ENCODE measurements at regions of chr19 and their contacts with region 1.

Region 1: DNA sequence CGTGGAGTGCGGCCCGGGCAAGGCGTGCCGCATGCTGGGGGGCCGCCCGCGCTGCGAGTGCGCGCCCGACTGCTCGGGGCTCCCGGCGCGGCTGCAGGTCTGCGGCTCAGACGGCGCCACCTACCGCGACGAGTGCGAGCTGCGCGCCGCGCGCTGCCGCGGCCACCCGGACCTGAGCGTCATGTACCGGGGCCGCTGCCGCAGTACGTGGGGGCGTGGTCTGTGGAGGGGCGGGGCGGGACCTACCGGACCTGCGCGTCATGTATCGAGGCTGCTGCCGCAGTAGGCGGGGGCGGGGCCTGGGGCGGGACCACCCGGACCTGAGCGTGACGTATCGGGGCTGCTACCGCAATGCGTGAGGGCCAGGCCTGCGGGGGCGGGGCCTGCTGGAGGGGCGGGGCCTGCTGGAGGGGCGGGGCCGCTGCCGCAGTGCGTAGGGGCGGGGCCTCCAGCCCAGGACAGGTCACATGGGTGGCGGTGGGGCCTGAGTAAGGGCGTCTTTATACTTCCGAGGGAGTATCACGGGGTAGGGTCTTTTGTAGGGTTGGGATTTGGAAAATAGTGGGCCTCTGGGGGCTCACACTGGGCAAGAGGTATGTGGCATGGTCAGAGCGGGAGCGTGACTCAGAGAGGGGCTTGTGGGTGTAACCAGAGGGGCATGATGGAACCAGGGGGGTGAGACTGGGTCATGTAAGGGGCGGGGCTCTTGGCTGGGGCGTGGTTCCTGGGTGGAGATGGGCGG is 4.3 kb downstream of the FSTL3 start:
- DNase-seq: peak; percentile 95
- H3K4me3 Mint-ChIP-seq: peak overlapping the region; percentile 86
- H3K27ac Mint-ChIP-seq: peak overlapping the region; percentile 99
- H3K4me1 Mint-ChIP-seq: no peaks in the 10 kb centered on the region
- H3K27me3 Mint-ChIP-seq: peaks cover 5% of the 10 kb centered on the region

Region 2: GRCh38 chr19:539429-540030 is 140.9 kb before region 1 on chr19:
- intact Hi-C with region 1: no loop called
- DNase-seq: no peak
- H3K4me3 Mint-ChIP-seq: no peak overlapping the region
- H3K27ac Mint-ChIP-seq: no peak overlapping the region
- H3K4me1 Mint-ChIP-seq: peaks cover 10% of the 10 kb centered on the region
- H3K27me3 Mint-ChIP-seq: no peaks in the 10 kb centered on the region

Region 3: GRCh38 chr19:610801-611505 is 69.5 kb before region 1 on chr19:
- intact Hi-C with region 1: loop called (anchors 2 kb)
- DNase-seq: peak; percentile 56
- H3K4me3 Mint-ChIP-seq: peak overlapping the region; percentile 87
- H3K27ac Mint-ChIP-seq: peak overlapping the region; percentile 98
- H3K4me1 Mint-ChIP-seq: peaks cover 14% of the 10 kb centered on the region
- H3K27me3 Mint-ChIP-seq: no peaks in the 10 kb centered on the region

Region 4: DNA sequence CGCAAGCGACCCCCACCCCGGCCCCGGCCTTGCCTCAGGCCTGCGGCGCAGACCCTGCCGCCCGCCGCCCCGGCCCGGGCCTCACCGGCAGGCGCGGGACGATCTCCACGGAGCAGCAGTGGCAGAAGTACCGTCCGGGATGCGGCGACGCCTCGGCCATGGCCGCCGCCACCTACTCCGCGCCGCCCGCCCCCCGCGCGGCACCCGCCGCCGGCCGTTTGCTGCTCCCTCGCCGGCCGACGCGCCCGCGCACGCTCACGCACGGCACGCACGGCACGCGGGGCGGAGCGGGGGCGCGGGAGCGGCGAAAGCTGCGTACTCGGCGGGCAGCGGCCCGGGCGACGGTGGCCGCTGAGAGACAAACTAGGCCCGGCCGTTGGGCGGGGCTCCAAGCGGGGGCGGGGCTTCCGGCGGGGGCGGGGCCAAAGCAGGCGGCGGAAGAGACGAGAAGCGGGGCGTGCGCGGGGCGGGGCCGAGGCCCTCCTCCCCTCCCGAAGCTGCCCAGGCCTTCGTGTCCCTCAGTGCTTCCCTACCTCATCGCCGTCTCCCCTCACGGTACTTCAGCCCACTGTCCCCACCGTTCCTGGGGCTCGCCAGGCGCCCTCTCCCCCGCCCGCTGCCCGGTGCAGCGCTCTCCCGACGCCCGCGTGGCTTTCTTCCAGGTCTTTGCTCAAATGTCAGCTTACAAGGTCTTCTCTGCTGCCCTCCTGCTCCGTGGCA is 17.3 kb before region 1 on chr19 and contains the start of gene RNF126:
- intact Hi-C with region 1: loop called (anchors 1 kb)
- DNase-seq: peak; percentile 84
- H3K4me3 Mint-ChIP-seq: peak within 1 kb of the TSS; percentile 95
- H3K27ac Mint-ChIP-seq: peak within 1 kb of the TSS; percentile 97
- H3K4me1 Mint-ChIP-seq: peaks cover 33% of the 10 kb centered on the region
- H3K27me3 Mint-ChIP-seq: no peaks in the 10 kb centered on the region
- total RNA-seq, gene RNF126: 107 and 110 TPM in 2 replicates

Region 5: DNA sequence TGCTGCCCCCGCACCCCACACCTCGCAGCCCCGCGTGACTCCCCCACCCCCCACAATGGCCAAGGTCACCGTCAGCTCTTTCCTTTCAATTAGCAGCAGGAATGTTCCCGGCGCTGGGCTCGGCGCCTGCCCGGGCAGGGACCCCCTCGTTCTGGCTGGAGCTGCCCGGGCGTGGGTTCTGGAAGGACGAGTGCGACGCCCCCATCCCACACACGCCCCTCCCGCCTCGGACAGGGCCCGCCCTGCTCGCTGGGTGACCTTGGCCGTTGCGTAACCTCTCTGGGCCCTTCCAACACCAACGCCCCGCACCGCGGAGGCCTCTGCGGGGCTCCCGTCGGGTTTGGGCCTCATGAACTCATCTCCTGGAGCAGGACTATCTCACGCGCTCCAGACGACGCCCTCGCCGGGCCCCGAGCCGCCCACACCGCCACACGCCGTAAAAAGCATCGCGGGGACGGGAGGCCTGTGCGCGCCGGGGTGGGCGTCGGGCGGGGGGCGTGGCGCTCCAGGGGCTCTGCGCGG is 38.6 kb after region 1 on chr19:
- intact Hi-C with region 1: no loop called
- DNase-seq: no peak
- H3K4me3 Mint-ChIP-seq: no peak overlapping the region
- H3K27ac Mint-ChIP-seq: no peak overlapping the region
- H3K4me1 Mint-ChIP-seq: no peaks in the 10 kb centered on the region
- H3K27me3 Mint-ChIP-seq: peaks cover 11% of the 10 kb centered on the region

Region 6: DNA sequence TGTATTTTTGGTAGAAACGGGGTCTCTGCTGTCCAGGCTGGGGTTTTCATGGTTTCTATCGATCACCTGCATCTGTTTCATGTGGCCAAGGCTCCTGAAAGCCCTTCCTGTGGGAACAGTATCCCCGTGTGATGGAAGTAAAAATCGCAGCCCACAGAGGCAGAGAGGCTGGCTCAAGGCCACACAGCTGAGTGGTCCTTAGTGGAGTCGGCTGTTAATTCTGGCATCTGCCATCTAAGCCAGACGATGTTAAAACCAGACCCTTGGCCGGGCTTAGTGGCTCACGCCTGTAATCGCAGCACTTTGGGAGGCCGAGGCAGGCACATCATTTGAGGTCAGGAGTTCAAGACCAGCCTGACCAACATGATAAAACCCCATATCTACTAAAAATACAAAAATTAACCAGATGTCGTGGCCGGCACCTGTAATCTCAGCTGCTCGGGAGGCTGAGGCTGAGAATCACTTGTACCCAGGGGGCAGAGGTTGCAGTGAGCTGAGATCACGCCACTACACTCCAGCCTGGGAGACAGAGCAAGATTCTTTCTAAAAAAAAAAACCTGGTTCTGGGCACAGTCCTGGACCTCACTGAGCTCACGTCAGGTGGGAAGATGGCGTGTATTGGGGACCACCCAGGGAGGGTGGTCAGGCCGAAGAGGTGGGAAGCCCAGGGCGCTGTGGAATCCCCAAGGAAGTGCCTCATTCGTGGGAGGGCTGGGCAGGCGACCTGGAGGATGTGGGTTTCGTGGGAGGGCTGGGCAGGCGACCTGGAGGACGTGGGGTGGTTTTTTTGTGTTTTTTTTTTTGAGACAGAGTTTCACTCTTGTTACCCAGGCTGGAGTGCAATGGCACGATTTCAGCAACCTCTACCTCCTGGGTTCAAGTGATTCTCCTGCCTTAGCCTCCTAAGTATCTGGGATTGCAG is 52.0 kb after region 1 on chr19:
- intact Hi-C with region 1: loop called (anchors 5 kb)
- DNase-seq: no peak
- H3K4me3 Mint-ChIP-seq: no peak overlapping the region
- H3K27ac Mint-ChIP-seq: no peak overlapping the region
- H3K4me1 Mint-ChIP-seq: no peaks in the 10 kb centered on the region
- H3K27me3 Mint-ChIP-seq: no peaks in the 10 kb centered on the region

Region 7: GRCh38 chr19:1154731-1155351 is 474.4 kb after region 1 on chr19:
- intact Hi-C with region 1: no loop called
- DNase-seq: no peak
- H3K4me3 Mint-ChIP-seq: no peak overlapping the region
- H3K27ac Mint-ChIP-seq: no peak overlapping the region
- H3K4me1 Mint-ChIP-seq: no peaks in the 10 kb centered on the region
- H3K27me3 Mint-ChIP-seq: no peaks in the 10 kb centered on the region